Activated naive CD4-positive, alpha-beta T cell treated with anti-CD3 and anti-CD28 coated beads for 36 hours (primary cell): ENCODE measurements at regions of chr7 and their contacts with region 1.

Region 1: GRCh38 chr7:143287935-143288826 is at the start of gene CASP2:
- DNase-seq: peak; percentile 99
- H3K4me3 Mint-ChIP-seq: peak within 1 kb of the TSS; percentile 96
- H3K27ac Mint-ChIP-seq: peak within 1 kb of the TSS; percentile 88
- H3K4me1 Mint-ChIP-seq: peaks cover 48% of the 10 kb centered on the region
- H3K27me3 Mint-ChIP-seq: no peaks in the 10 kb centered on the region
- total RNA-seq, gene CASP2: 116 to 124 TPM

Region 2: DNA sequence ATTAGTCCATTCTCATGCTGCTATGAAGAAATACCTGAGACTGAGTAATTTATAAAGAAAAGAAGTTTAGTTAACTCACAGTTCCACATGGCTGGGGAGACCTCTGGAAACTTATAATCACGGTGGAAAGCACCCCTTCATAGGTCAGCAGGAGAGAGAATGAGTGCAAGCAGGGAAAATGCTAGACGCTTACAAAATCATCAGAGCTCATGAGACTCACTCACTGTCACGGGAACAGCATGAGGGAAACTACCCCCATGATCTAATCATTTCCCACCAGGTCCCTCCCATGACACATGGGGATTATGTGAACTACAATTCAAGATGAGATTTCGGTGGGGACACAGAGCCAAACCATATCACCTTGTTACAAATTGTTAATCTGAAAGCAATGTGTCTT is 89.1 kb before region 1 on chr7:
- CTCF ChIA-PET with region 1: no interaction called
- intact Hi-C with region 1: no loop called
- DNase-seq: no peak
- H3K4me3 Mint-ChIP-seq: no peak overlapping the region
- H3K27ac Mint-ChIP-seq: no peak overlapping the region
- H3K4me1 Mint-ChIP-seq: no peaks in the 10 kb centered on the region
- H3K27me3 Mint-ChIP-seq: peaks cover 6% of the 10 kb centered on the region

Region 3: DNA sequence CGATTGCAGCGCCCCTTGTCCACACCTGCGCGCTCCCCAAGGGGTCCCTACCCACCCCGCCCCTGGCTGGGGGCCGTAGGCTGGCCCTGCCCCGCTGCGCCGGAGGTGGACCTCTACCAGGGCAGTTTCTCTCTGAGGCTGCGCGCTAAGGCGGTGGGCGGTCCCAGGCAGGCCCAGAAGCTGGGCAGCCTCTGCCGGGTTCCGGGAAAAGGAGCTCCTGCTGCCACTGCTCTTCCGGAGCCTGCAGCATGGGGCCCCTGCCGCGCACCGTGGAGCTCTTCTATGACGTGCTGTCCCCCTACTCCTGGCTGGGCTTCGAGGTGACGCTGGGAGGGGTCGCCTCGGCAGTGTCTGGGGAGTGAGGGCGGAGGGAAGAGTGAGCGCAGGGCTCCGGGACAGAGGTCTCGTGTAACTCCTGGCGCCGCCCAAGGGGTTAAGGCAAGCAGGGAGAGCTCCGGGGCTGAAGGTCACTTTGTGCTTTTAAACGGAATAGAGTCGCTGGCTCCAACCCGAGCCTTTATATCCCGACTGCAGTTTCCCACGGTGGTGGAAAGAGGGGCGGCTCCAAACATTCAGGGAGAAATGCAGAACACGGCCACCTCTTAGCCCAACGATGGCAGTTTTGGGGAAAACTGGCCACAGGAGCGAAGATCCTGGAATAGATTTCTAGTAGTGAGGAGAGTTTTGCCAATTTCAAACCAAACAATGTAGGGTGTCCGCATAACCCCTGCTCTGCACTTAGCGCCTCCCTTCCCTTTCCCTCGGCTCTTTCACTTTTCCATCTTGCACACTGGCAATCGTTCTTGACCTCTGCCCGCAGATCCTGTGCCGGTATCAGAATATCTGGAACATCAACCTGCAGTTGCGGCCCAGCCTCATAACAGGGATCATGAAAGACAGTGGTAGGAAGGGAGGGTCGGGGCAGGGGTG is 24.6 kb before region 1 on chr7 and contains the start of gene GSTK1:
- CTCF ChIA-PET with region 1: interaction called, 9 read pairs
- intact Hi-C with region 1: loop called (anchors 1 kb)
- DNase-seq: peak; percentile 90
- H3K4me3 Mint-ChIP-seq: peak within 1 kb of the TSS; percentile 96
- H3K27ac Mint-ChIP-seq: peak within 1 kb of the TSS; percentile 96
- H3K4me1 Mint-ChIP-seq: peaks cover 55% of the 10 kb centered on the region
- H3K27me3 Mint-ChIP-seq: no peaks in the 10 kb centered on the region
- total RNA-seq, gene GSTK1: 186 to 187 TPM

Region 4: DNA sequence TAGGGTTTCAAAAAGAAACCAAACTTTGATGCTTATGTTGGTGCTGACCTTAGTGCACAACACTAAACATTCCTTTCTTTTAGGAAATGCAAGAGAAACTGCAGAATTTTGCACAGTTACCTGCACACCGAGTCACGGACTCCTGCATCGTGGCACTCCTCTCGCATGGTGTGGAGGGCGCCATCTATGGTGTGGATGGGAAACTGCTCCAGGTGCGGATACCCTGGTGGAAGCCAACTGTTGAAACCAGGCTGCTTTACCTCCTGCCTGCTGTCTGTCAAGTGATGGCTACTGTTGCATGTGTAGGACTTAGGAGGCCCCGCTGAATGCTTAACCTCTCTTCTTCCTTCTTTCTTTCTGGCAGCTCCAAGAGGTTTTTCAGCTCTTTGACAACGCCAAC is 11.7 kb after region 1 on chr7:
- CTCF ChIA-PET with region 1: interaction called, 24 read pairs
- intact Hi-C with region 1: loop called (anchors 1 kb)
- DNase-seq: peak; percentile 72
- H3K4me3 Mint-ChIP-seq: no peak overlapping the region
- H3K27ac Mint-ChIP-seq: peak overlapping the region; percentile 15
- H3K4me1 Mint-ChIP-seq: peaks cover 31% of the 10 kb centered on the region
- H3K27me3 Mint-ChIP-seq: no peaks in the 10 kb centered on the region

Region 5: DNA sequence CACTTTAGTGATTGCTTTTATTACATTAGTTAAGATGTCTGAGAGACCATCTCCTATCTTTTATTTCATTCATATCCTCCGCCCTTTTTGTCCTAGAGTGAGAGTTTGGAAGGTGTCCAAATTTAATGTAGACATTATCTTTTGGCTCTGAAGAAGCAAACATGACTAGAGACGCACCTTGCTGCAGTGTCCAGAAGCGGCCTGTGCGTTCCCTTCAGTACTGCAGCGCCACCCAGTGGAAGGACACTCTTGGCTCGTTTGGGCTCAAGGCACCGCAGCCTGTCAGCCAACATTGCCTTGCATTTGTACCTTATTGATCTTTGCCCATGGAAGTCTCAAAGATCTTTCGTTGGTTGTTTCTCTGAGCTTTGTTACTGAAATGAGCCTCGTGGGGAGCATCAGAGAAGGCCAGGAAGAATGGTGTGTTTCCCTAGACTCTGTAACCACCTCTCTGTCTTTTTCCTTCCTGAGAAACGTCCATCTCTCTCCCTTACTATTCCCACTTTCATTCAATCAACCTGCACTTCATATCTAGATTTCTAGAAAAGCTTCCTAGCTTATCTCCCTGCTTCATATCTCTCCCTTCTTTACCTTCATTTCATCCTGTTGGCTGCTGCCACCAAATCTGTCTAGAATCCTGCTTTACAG is 17.4 kb after region 1 on chr7:
- CTCF ChIA-PET with region 1: interaction called, 24 read pairs
- intact Hi-C with region 1: loop called (anchors 1 kb)
- DNase-seq: peak; percentile 83
- H3K4me3 Mint-ChIP-seq: no peak overlapping the region
- H3K27ac Mint-ChIP-seq: peak overlapping the region; percentile 71
- H3K4me1 Mint-ChIP-seq: peaks cover 41% of the 10 kb centered on the region
- H3K27me3 Mint-ChIP-seq: no peaks in the 10 kb centered on the region

Region 6: GRCh38 chr7:143362131-143363015 is 74.2 kb after region 1 on chr7 and contains the start of gene FAM131B:
- CTCF ChIA-PET with region 1: no interaction called
- intact Hi-C with region 1: loop called (anchors 2 kb)
- DNase-seq: peak; percentile 52
- H3K4me3 Mint-ChIP-seq: peak within 1 kb of the TSS; percentile 85
- H3K27ac Mint-ChIP-seq: no peak within 1 kb of the TSS
- H3K4me1 Mint-ChIP-seq: peaks cover 4% of the 10 kb centered on the region
- H3K27me3 Mint-ChIP-seq: peaks cover 21% of the 10 kb centered on the region
- total RNA-seq, gene FAM131B: 1.5 to 1.7 TPM

Region 7: DNA sequence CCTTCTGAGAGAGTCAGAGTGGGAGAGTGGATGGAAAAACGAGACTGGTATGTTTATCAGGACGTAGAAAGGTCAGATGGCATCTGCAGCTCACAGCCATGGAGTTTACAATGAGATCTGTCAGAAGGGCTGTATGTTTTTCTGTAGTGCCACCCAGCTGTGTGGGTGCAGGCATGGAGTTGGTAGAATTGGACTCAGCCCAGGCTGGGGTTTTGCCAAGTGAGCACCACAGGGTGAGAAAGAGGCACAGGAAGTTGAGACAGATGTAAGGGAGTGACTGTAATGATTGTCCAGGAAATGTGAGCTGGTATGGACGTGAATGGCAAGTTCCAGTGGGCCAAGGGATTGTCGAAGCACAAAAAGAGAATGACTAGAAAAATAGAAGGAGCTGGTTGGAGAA is 83.9 kb after region 1 on chr7:
- CTCF ChIA-PET with region 1: no interaction called
- intact Hi-C with region 1: loop called (anchors 1 kb)
- DNase-seq: peak; percentile 90
- H3K4me3 Mint-ChIP-seq: no peak overlapping the region
- H3K27ac Mint-ChIP-seq: peak overlapping the region; percentile 24
- H3K4me1 Mint-ChIP-seq: peaks cover 41% of the 10 kb centered on the region
- H3K27me3 Mint-ChIP-seq: no peaks in the 10 kb centered on the region

Region 8: DNA sequence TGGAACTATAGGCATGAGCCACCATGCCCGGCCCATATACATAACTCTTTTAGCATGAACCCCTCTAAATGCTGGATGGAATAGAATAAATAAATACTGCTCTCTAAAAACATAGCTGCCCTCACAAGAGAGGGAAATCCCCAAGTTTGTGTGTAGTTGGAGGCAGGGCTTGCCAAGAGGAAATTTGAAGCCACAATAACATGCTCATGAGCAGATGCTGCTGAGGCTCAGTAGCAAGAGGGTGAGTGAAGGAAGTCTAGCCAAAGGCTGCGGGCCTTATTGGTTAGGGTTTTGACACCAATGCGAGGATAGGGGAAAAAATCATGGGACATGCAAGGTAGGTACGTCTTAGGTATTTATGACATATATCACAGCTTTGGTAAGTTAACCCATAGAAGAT is 1530.3 kb after region 1 on chr7:
- CTCF ChIA-PET with region 1: no interaction called
- intact Hi-C with region 1: loop called (anchors 10 kb)
- DNase-seq: peak; percentile 80
- H3K4me3 Mint-ChIP-seq: peak overlapping the region; percentile 35
- H3K27ac Mint-ChIP-seq: peak overlapping the region; percentile 94
- H3K4me1 Mint-ChIP-seq: peaks cover 76% of the 10 kb centered on the region
- H3K27me3 Mint-ChIP-seq: no peaks in the 10 kb centered on the region